Endothelial cell of umbilical vein (primary cell): ENCODE measurements at regions of chr5 and their contacts with region 1.

Region 1: DNA sequence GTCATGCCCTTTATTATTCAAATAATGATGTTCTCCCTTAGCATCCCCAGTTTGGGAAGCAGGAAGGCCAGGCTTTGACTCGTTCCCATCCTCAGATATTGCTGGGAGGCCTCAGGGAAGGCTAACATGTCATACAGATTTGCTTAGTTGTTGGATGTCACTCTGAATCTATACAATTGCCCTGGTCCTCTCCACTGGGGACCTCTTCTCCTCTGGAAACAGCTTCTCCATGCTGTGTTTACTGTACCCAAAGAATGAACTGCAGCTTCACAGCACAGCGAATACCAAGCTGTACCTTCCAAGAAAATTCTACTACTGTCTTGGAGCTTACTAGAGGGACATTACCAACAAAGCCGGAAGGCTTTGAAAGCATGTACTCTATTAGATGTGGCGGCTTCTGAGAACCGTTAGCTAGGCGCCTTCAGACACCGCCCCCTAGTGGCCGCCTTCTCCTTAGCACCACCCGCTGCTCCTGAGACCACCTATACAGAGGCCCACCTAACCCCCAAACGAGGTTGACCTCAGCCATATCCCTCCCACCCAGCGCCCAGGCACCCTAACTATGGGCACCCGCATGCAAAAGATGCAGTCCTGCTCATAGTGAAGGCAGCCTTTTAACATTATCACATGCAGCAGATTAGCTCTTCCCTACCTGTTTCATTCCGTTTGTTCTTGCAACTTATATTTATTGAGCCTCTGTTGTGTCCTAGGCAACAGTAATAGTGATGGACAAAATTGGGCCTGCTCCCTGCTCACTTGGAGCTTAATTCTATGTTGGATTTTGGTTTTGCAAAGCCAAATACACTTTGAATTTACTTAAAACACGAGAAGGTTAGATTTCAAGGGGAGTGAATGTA is 34.9 kb upstream of the FOXI1 start:
- DNase-seq: peak; percentile 56
- H3K4me3 ChIP-seq: no peak overlapping the region
- H3K27ac ChIP-seq: no peak overlapping the region
- H3K4me1 ChIP-seq: peaks cover 11% of the 10 kb centered on the region
- H3K27me3 ChIP-seq: no peaks in the 10 kb centered on the region
- CTCF ChIP-seq: peak; percentile 62 to 91
- POLR2A ChIP-seq: no peak

Region 2: GRCh38 chr5:169591636-169592035 is 479.1 kb before region 1 on chr5:
- CTCF ChIA-PET with region 1: interaction called, 7 read pairs
- POLR2A ChIA-PET with region 1: no interaction called
- dilution Hi-C with region 1: no loop called
- intact Hi-C with region 1: loop called (anchors 5 kb)
- DNase-seq: no peak
- H3K4me3 ChIP-seq: no peak overlapping the region
- H3K27ac ChIP-seq: no peak overlapping the region
- H3K4me1 ChIP-seq: no peaks in the 10 kb centered on the region
- H3K27me3 ChIP-seq: no peaks in the 10 kb centered on the region
- CTCF ChIP-seq: no peak
- POLR2A ChIP-seq: no peak

Region 3: GRCh38 chr5:169706758-169707691 is 363.8 kb before region 1 on chr5:
- CTCF ChIA-PET with region 1: interaction called, 80 read pairs
- POLR2A ChIA-PET with region 1: no interaction called
- dilution Hi-C with region 1: no loop called
- intact Hi-C with region 1: loop called (anchors 1 kb)
- DNase-seq: peak; percentile 59
- H3K4me3 ChIP-seq: no peak overlapping the region
- H3K27ac ChIP-seq: peak overlapping the region; percentile 4
- H3K4me1 ChIP-seq: peaks cover 24% of the 10 kb centered on the region
- H3K27me3 ChIP-seq: no peaks in the 10 kb centered on the region
- CTCF ChIP-seq: no peak
- POLR2A ChIP-seq: no peak

Region 4: DNA sequence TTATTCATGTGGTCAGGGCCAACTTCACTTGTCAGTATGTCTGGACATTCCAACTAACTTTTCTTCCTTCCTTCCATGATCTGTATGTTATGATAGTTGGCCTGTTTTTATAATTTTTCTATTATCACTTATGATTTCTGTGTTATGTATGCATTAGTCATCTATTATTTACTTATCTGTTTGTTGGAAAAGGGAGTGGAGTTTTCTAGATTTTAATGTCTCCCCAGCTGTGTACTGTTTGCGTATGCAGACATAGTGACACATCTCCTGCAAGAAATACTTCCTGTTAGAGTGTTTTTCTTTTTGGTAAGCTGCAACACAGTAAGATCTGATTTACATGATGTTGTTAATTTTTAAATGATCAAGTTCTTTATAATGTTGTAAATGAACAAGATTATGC is 81.8 kb before region 1 on chr5:
- CTCF ChIA-PET with region 1: interaction called, 5 read pairs
- POLR2A ChIA-PET with region 1: no interaction called
- dilution Hi-C with region 1: no loop called
- intact Hi-C with region 1: loop called (anchors 2 kb)
- DNase-seq: peak; percentile 75
- H3K4me3 ChIP-seq: no peak overlapping the region
- H3K27ac ChIP-seq: peak overlapping the region; percentile 95
- H3K4me1 ChIP-seq: peaks cover 26% of the 10 kb centered on the region
- H3K27me3 ChIP-seq: no peaks in the 10 kb centered on the region
- CTCF ChIP-seq: no peak
- POLR2A ChIP-seq: no peak

Region 5: DNA sequence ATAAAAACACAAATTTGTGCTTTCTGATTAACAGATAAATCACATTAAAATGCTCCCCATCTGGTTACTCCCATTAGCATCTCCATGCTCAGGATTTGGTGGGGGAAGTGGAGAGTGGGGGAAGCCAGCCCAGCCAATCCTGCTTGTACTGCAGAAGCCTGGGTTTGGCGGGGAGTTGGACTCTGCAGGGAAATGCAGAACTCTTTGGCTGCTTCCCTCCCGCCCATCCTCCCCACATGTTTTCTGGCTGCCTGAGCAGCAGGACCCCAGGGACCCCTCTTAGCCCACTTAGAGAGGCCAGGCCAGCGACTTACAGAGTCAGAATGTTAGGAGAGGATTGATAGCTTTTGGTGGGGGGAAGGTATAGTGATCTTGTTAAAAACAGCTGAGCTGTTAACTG is 24.5 kb before region 1 on chr5:
- CTCF ChIA-PET with region 1: interaction called, 10 read pairs
- POLR2A ChIA-PET with region 1: no interaction called
- dilution Hi-C with region 1: no loop called
- intact Hi-C with region 1: no loop called
- DNase-seq: no peak
- H3K4me3 ChIP-seq: no peak overlapping the region
- H3K27ac ChIP-seq: no peak overlapping the region
- H3K4me1 ChIP-seq: no peaks in the 10 kb centered on the region
- H3K27me3 ChIP-seq: peaks cover 0 to 2% of the 10 kb centered on the region in 2 experiments
- CTCF ChIP-seq: no peak
- POLR2A ChIP-seq: no peak

Region 6: GRCh38 chr5:170092455-170093101 is 21.8 kb after region 1 on chr5:
- CTCF ChIA-PET with region 1: interaction called, 12 read pairs
- POLR2A ChIA-PET with region 1: no interaction called
- dilution Hi-C with region 1: no loop called
- intact Hi-C with region 1: no loop called
- DNase-seq: no peak
- H3K4me3 ChIP-seq: no peak overlapping the region
- H3K27ac ChIP-seq: no peak overlapping the region
- H3K4me1 ChIP-seq: peaks cover 12% of the 10 kb centered on the region
- H3K27me3 ChIP-seq: peaks cover 9 to 12% of the 10 kb centered on the region in 2 experiments
- CTCF ChIP-seq: no peak
- POLR2A ChIP-seq: no peak